Endothelial cell of umbilical vein (primary cell): ENCODE measurements at regions of chr16 and their contacts with region 1.

Region 1: GRCh38 chr16:4373863-4374742 is 2.5 kb downstream of the VASN start:
- DNase-seq: no peak
- H3K4me3 ChIP-seq: no peak overlapping the region
- H3K27ac ChIP-seq: no peak overlapping the region
- H3K4me1 ChIP-seq: peaks cover 6% of the 10 kb centered on the region
- H3K27me3 ChIP-seq: no peaks in the 10 kb centered on the region
- CTCF ChIP-seq: no peak
- POLR2A ChIP-seq: no peak

Region 2: GRCh38 chr16:4358831-4359561 is 15.1 kb before region 1 on chr16:
- CTCF ChIA-PET with region 1: interaction called, 18 read pairs
- POLR2A ChIA-PET with region 1: no interaction called
- dilution Hi-C with region 1: no loop called
- intact Hi-C with region 1: no loop called
- DNase-seq: no peak
- H3K4me3 ChIP-seq: no peak overlapping the region
- H3K27ac ChIP-seq: no peak overlapping the region
- H3K4me1 ChIP-seq: no peaks in the 10 kb centered on the region
- H3K27me3 ChIP-seq: no peaks in the 10 kb centered on the region
- CTCF ChIP-seq: peak; percentile 85 to 91
- POLR2A ChIP-seq: no peak